HepG2 (cell line): ENCODE measurements at regions of chr5 and their contacts with region 1.

Region 1: GRCh38 chr5:123937230-123937629 is 425.3 kb downstream of the CSNK1G3 start:
- DNase-seq: peak; percentile 65
- ATAC-seq: peak; percentile 95
- H3K4me3 ChIP-seq: no peak overlapping the region
- H3K27ac ChIP-seq: no peak overlapping the region
- H3K4me1 ChIP-seq: no peaks in the 10 kb centered on the region
- H3K27me3 ChIP-seq: no peaks in the 10 kb centered on the region
- CTCF ChIP-seq: peak; percentile 87
- EP300 ChIP-seq: no peak
- POLR2A ChIP-seq: no peak
- RAD21 ChIP-seq: peak; percentile 71

Region 2: DNA sequence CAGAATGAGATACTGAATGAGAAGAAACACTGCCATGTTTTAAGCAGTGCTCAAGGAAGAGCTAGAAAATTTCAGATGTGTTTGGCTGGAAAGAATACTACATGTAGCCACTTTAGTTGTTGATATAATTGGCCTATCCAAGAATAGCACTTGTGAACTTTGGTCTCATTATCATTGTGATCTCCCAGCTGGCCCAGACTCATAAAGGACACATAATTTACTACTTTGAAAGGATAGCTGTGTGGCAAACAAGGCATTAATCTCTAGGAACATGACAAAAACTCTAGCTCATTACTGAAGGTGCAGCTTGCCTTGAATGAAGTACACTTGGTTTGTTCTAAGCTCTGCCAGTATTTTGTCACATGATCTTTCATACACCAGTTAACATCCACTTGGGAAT is 69.0 kb before region 1 on chr5:
- CTCF ChIA-PET with region 1: no interaction called
- POLR2A ChIA-PET with region 1: no interaction called
- in situ Hi-C with region 1: no loop called
- intact Hi-C with region 1: no loop called
- DNase-seq: no peak
- ATAC-seq: no peak
- H3K4me3 ChIP-seq: no peak overlapping the region
- H3K27ac ChIP-seq: no peak overlapping the region
- H3K4me1 ChIP-seq: no peaks in the 10 kb centered on the region
- H3K27me3 ChIP-seq: no peaks in the 10 kb centered on the region
- CTCF ChIP-seq: no peak
- EP300 ChIP-seq: no peak
- POLR2A ChIP-seq: no peak
- RAD21 ChIP-seq: no peak

Region 3: GRCh38 chr5:124206540-124206939 is 269.3 kb after region 1 on chr5:
- CTCF ChIA-PET with region 1: no interaction called
- POLR2A ChIA-PET with region 1: no interaction called
- in situ Hi-C with region 1: no loop called
- intact Hi-C with region 1: no loop called
- DNase-seq: no peak
- ATAC-seq: no peak
- H3K4me3 ChIP-seq: no peak overlapping the region
- H3K27ac ChIP-seq: no peak overlapping the region
- H3K4me1 ChIP-seq: no peaks in the 10 kb centered on the region
- H3K27me3 ChIP-seq: no peaks in the 10 kb centered on the region
- CTCF ChIP-seq: no peak
- EP300 ChIP-seq: no peak
- POLR2A ChIP-seq: no peak
- RAD21 ChIP-seq: no peak

Region 4: GRCh38 chr5:124289641-124290311 is 352.5 kb after region 1 on chr5:
- CTCF ChIA-PET with region 1: no interaction called
- POLR2A ChIA-PET with region 1: no interaction called
- in situ Hi-C with region 1: no loop called
- intact Hi-C with region 1: loop called (anchors 5 kb)
- DNase-seq: peak; percentile 91
- ATAC-seq: peak; percentile 96
- H3K4me3 ChIP-seq: no peak overlapping the region; a peak in 1 of 6 replicates
- H3K27ac ChIP-seq: peak overlapping the region; percentile 42
- H3K4me1 ChIP-seq: peaks cover 41% of the 10 kb centered on the region
- H3K27me3 ChIP-seq: no peaks in the 10 kb centered on the region
- CTCF ChIP-seq: peak; percentile 57
- EP300 ChIP-seq: peak in 1 of 2 experiments; percentile 83; a peak in 2 of 4 replicates
- POLR2A ChIP-seq: no peak
- RAD21 ChIP-seq: no peak

Region 5: DNA sequence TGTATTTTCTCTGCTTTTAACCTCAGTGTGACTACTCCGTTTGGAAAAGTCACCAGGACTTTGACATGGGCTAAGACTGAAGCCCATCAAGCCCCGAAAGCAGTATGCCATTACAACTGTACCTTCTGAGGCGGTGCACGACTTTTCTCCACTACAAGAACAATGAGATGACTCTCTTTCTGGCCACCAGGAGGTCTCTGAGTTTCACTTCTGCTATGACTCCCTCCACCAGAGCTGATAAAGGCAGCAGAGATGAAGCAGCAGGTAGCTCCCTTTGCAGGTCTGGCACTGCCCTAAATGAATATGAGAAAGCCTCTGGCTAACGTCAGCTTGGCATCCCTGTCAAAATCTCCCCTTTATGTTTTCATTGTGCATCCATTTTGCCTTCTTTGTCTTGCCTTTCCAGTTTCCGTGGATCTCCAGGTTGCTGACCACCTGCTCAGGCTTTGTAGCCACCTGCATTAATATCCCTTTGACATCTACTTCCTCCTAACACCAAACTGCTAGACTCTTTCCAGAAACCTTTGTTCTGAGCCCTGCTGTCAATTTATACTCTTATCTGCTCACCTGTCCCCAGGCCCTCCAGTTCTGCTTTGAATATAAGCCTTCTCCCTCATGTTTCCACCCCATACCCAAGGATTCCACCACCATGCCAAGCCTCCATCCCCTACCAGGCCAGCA is 587.5 kb after region 1 on chr5:
- CTCF ChIA-PET with region 1: no interaction called
- POLR2A ChIA-PET with region 1: no interaction called
- in situ Hi-C with region 1: no loop called
- intact Hi-C with region 1: loop called (anchors 10 kb)
- DNase-seq: peak; percentile 31
- ATAC-seq: peak; percentile 77
- H3K4me3 ChIP-seq: no peak overlapping the region
- H3K27ac ChIP-seq: no peak overlapping the region
- H3K4me1 ChIP-seq: peaks cover 30% of the 10 kb centered on the region
- H3K27me3 ChIP-seq: peaks cover 0 to 3% of the 10 kb centered on the region in 2 experiments; a peak in 1 of 5 replicates
- CTCF ChIP-seq: peak; percentile 58
- EP300 ChIP-seq: no peak
- POLR2A ChIP-seq: no peak
- RAD21 ChIP-seq: peak; percentile 44; the same call in 1 of the 2 replicates

Region 6: DNA sequence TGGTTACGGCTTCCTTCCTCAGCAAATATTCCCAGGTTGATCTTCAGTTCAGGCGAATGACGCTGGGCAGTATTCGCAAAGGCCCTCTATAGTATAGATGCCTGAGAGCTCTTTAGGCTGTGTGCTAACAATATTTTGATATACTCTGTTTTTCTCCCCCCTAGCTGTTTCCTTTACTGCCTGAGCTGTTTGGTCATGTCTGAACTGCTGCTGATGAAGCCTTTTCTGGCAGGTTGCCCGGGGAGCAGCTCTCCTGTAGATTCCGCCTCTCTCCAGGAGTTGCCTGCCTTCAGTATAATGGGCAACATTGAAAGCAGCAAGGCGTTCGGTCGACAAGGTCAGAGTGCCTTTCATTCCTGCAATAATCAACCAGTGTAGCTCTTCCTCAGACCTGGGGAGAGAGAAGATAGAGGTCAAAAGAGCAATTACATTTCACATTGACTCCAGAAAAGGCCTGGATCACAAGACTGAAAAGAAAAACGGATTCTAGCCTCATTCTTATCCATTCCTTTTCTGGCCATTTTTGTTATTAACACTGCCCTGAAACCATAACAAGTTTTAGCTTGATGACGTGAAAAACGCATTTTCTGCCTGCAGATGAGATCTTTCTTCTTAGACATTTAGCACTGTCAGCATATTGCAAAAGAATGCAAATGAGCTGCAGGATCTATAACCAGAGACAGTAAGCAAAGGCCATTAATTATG is 869.3 kb after region 1 on chr5:
- CTCF ChIA-PET with region 1: no interaction called
- POLR2A ChIA-PET with region 1: no interaction called
- in situ Hi-C with region 1: no loop called
- intact Hi-C with region 1: loop called (anchors 5 kb)
- DNase-seq: peak; percentile 73
- ATAC-seq: peak; percentile 96
- H3K4me3 ChIP-seq: no peak overlapping the region
- H3K27ac ChIP-seq: no peak overlapping the region
- H3K4me1 ChIP-seq: peaks cover 16% of the 10 kb centered on the region
- H3K27me3 ChIP-seq: no peaks in the 10 kb centered on the region
- CTCF ChIP-seq: no peak
- EP300 ChIP-seq: no peak
- POLR2A ChIP-seq: no peak
- RAD21 ChIP-seq: no peak

Region 7: DNA sequence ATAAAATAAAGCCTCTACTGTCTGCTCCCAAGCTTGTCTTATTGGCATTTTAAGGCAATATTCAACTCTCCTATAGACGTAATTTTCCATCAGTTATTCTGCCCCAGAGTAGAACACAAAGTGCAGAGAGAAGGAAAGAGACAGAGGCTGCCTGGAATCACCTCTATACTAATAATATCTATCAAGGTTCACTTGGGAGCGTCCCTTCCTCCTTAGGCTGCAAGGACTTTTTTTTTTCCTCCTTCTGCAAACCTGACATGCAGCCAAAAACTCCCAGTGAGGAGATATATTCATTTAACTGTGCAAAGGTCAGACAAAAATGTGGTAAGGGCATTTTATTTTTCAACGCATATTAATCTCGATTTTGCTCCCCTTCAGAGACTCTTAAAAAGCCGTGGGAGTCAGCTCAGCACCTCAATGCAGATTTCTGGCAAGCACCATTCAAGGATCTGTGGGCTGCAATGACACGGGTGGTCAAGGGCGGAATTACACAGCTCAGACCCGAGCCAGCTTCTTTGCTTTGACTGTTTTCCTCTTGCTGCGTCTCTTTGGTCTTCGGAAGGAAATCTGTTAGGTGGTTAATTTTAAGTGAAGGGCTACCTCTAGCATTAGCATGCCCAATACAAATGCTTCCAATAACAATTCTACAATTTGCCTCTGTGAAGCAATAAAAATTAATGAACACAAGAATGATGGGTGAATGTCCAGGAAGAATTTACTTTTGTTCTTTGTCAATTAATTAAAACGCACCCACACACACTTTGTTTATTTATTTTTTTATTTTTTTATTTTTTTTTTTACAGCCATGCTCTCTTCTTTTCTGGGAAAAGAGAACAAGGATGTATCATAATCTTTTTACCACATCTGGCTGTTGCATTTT is 1898.3 kb after region 1 on chr5:
- CTCF ChIA-PET with region 1: no interaction called
- POLR2A ChIA-PET with region 1: no interaction called
- in situ Hi-C with region 1: no loop called
- intact Hi-C with region 1: loop called (anchors 1 kb)
- DNase-seq: peak; percentile 1
- ATAC-seq: peak; percentile 87
- H3K4me3 ChIP-seq: no peak overlapping the region
- H3K27ac ChIP-seq: no peak overlapping the region
- H3K4me1 ChIP-seq: no peaks in the 10 kb centered on the region
- H3K27me3 ChIP-seq: no peaks in the 10 kb centered on the region
- CTCF ChIP-seq: peak; percentile 47
- EP300 ChIP-seq: no peak
- POLR2A ChIP-seq: no peak
- RAD21 ChIP-seq: peak; percentile 40; the same call in 1 of the 2 replicates